Mammary epithelial cell (primary cell): ENCODE measurements at regions of chr15 and their contacts with region 1.

Region 1: GRCh38 chr15:80660122-80660521 is 35.0 kb upstream of the ABHD17C start:
- DNase-seq: no peak
- H3K4me3 ChIP-seq: no peak overlapping the region
- H3K27ac ChIP-seq: no peak overlapping the region
- H3K4me1 ChIP-seq: peaks cover 27% of the 10 kb centered on the region
- H3K27me3 ChIP-seq: no peaks in the 10 kb centered on the region
- CTCF ChIP-seq: peak; percentile 33 to 54

Region 2: GRCh38 chr15:80580106-80580505 is 80.0 kb before region 1 on chr15:
- CTCF ChIA-PET with region 1: interaction called, 4 read pairs
- dilution Hi-C with region 1: no loop called
- in situ Hi-C with region 1: no loop called
- intact Hi-C with region 1: loop called (anchors 2 kb)
- DNase-seq: peak; percentile 100
- H3K4me3 ChIP-seq: no peak overlapping the region
- H3K27ac ChIP-seq: peak overlapping the region; percentile 87
- H3K4me1 ChIP-seq: peaks cover 43% of the 10 kb centered on the region
- H3K27me3 ChIP-seq: no peaks in the 10 kb centered on the region
- CTCF ChIP-seq: no peak

Region 3: GRCh38 chr15:80599359-80599758 is 60.8 kb before region 1 on chr15:
- CTCF ChIA-PET with region 1: no interaction called
- dilution Hi-C with region 1: no loop called
- in situ Hi-C with region 1: no loop called
- intact Hi-C with region 1: no loop called
- DNase-seq: peak; percentile 85
- H3K4me3 ChIP-seq: no peak overlapping the region
- H3K27ac ChIP-seq: peak overlapping the region; percentile 21
- H3K4me1 ChIP-seq: peaks cover 19% of the 10 kb centered on the region
- H3K27me3 ChIP-seq: no peaks in the 10 kb centered on the region
- CTCF ChIP-seq: no peak

Region 4: GRCh38 chr15:80629355-80629754 is 30.8 kb before region 1 on chr15:
- CTCF ChIA-PET with region 1: no interaction called
- dilution Hi-C with region 1: loop called (anchors 5 kb)
- in situ Hi-C with region 1: no loop called
- intact Hi-C with region 1: no loop called
- DNase-seq: no peak
- H3K4me3 ChIP-seq: no peak overlapping the region
- H3K27ac ChIP-seq: no peak overlapping the region
- H3K4me1 ChIP-seq: no peaks in the 10 kb centered on the region
- H3K27me3 ChIP-seq: no peaks in the 10 kb centered on the region
- CTCF ChIP-seq: no peak

Region 5: GRCh38 chr15:80679167-80680131 is 19.3 kb after region 1 on chr15:
- CTCF ChIA-PET with region 1: no interaction called
- dilution Hi-C with region 1: no loop called
- in situ Hi-C with region 1: no loop called
- intact Hi-C with region 1: loop called (anchors 2 kb)
- DNase-seq: peak; percentile 85
- H3K4me3 ChIP-seq: no peak overlapping the region
- H3K27ac ChIP-seq: peak overlapping the region; percentile 63
- H3K4me1 ChIP-seq: peaks cover 15% of the 10 kb centered on the region
- H3K27me3 ChIP-seq: no peaks in the 10 kb centered on the region
- CTCF ChIP-seq: no peak

Region 6: GRCh38 chr15:80695104-80695910 is 35.2 kb after region 1 on chr15 and contains the start of gene ABHD17C:
- CTCF ChIA-PET with region 1: interaction called, 15 read pairs
- dilution Hi-C with region 1: no loop called
- in situ Hi-C with region 1: no loop called
- intact Hi-C with region 1: loop called (anchors 1 kb)
- DNase-seq: peak; percentile 70
- H3K4me3 ChIP-seq: peak within 1 kb of the TSS; percentile 89 to 95 (median 95)
- H3K27ac ChIP-seq: peak within 1 kb of the TSS; percentile 79
- H3K4me1 ChIP-seq: peaks cover 19% of the 10 kb centered on the region
- H3K27me3 ChIP-seq: no peaks in the 10 kb centered on the region
- CTCF ChIP-seq: no peak
- total RNA-seq, gene ABHD17C: 5.2 to 23.2 TPM

Region 7: GRCh38 chr15:80970018-80970658 is 310.0 kb after region 1 on chr15:
- CTCF ChIA-PET with region 1: no interaction called
- dilution Hi-C with region 1: no loop called
- in situ Hi-C with region 1: no loop called
- intact Hi-C with region 1: loop called (anchors 2 kb)
- DNase-seq: peak; percentile 37
- H3K4me3 ChIP-seq: no peak overlapping the region
- H3K27ac ChIP-seq: no peak overlapping the region
- H3K4me1 ChIP-seq: no peaks in the 10 kb centered on the region
- H3K27me3 ChIP-seq: no peaks in the 10 kb centered on the region
- CTCF ChIP-seq: peak; percentile 57 to 79